Activated naive CD8-positive, alpha-beta T cell treated with anti-CD3 and anti-CD28 coated beads, Interleukin-2, amount 10 ng/mL, durations not matched to agents 7 days and 5 days (primary cell): ENCODE measurements at regions of chr17 and their contacts with region 1.

Region 1: DNA sequence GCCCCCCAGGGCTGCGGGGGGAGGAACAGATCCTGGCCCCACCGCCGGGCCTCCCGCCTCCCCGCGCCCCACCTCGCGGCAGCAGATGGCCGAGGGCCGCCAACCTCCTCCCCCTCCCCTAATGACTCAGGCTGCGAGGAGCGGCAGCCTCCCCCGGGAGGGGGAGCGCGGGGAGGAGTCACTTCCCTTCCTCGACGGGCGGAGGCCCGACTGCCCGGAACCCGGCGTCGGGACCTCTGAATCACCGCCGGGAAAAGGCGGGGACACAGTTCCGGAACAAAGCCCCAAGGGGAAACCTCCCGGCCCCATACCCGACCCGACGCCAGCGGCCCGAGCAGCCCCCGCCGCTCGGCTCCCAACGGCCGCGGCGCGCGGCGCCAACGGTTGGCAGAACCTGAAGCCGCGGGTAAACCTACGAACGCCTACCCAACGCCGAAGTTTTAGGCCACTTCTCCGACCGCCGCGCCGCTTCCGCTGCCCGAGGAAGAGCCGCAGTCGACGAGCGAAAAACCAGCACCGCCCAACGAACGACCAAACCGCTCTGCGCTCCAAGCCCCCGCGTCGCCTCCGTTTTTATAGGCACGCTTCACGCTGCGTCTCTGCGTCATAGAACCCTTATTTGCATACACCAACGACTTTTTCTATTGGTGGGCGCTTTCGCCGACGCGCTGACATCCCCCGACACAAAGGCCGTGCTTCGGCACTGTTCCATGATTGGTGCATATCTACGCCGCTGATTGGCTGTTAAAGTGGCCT is 5.2 kb upstream of the UNK start:
- DNase-seq: peak; percentile 93
- ATAC-seq: peak; percentile 76
- H3K4me3 Mint-ChIP-seq: peak overlapping the region; percentile 99
- H3K27ac Mint-ChIP-seq: peak overlapping the region; percentile 99
- H3K4me1 Mint-ChIP-seq: peaks cover 42% of the 10 kb centered on the region
- H3K27me3 Mint-ChIP-seq: no peaks in the 10 kb centered on the region

Region 2: GRCh38 chr17:75753514-75754377 is 25.7 kb before region 1 on chr17:
- POLR2A ChIA-PET with region 1: interaction called, 25 read pairs
- DNase-seq: peak; percentile 89
- ATAC-seq: peak; percentile 81
- H3K4me3 Mint-ChIP-seq: peak overlapping the region; percentile 54
- H3K27ac Mint-ChIP-seq: no peak overlapping the region
- H3K4me1 Mint-ChIP-seq: peaks cover 8% of the 10 kb centered on the region
- H3K27me3 Mint-ChIP-seq: no peaks in the 10 kb centered on the region

Region 3: DNA sequence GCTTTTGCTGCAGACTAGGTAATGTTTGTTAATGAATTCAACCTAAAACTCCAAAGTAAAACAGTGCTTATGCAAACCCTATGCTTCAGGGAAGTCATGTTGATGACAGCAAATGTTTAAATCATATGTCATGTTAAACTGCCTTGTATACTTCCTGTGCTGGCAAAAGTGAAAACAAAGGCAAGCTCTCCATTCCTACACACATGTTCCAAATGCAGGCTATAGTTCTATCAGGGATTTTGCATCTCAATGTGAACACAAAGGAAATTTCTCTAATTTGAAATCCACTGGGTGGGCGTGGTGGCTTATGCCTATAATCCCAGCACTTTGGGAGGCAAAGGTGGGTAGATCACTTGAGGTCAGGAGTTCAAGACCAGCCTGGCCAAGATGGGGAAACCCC is 24.5 kb after region 1 on chr17:
- POLR2A ChIA-PET with region 1: interaction called, 11 read pairs
- DNase-seq: no peak
- ATAC-seq: peak; percentile 39
- H3K4me3 Mint-ChIP-seq: no peak overlapping the region
- H3K27ac Mint-ChIP-seq: no peak overlapping the region
- H3K4me1 Mint-ChIP-seq: peaks cover 6% of the 10 kb centered on the region
- H3K27me3 Mint-ChIP-seq: no peaks in the 10 kb centered on the region

Region 4: DNA sequence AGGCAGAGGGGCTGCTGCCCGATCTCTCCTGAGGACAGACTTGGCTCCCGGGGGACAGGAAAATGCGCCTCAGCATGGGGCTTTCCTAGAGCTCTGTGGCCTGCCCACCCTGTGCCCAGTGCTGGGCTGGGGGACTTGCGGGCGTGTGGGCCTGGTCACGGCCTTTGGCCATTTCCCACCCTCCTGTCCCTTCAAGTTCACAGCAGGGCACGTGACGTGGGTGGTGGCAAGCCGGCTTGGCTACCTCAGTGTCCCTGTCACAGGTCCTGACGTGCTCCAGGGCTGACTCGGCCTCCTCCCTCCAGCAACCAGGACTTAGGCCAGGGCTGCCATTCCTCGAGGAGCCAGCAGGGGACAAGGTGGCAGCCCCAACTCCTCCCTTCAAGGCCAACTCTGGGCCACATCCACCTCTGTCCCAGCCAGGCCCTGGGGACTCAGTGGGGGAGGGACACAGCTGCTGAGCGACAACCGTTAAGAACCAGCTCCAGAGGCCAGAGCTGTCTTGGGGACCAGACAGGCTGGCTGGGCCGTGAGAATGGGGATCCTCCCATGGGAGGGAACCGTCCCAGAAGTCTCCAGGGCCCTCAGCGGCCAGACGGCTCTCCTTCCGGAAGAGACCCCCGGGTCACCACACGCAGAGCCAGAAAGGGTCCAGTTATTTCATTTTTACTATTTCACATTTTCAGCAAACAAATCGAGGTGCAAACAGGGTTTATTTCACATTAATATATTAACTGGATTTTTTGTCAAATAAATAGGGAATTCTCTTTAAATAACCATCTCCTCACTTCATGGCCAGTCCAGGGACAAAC is 65.8 kb after region 1 on chr17:
- POLR2A ChIA-PET with region 1: interaction called, 126 read pairs
- DNase-seq: peak; percentile 71
- ATAC-seq: peak; percentile 36
- H3K4me3 Mint-ChIP-seq: peak overlapping the region; percentile 51
- H3K27ac Mint-ChIP-seq: peak overlapping the region; percentile 83
- H3K4me1 Mint-ChIP-seq: peaks cover 14% of the 10 kb centered on the region
- H3K27me3 Mint-ChIP-seq: no peaks in the 10 kb centered on the region

Region 5: GRCh38 chr17:75896415-75897159 is 117.2 kb after region 1 on chr17 and contains the start of gene TRIM65:
- POLR2A ChIA-PET with region 1: interaction called, 16 read pairs
- DNase-seq: peak; percentile 89
- ATAC-seq: peak; percentile 87
- H3K4me3 Mint-ChIP-seq: peak within 1 kb of the TSS; percentile 87
- H3K27ac Mint-ChIP-seq: peak within 1 kb of the TSS; percentile 86
- H3K4me1 Mint-ChIP-seq: peaks cover 18% of the 10 kb centered on the region
- H3K27me3 Mint-ChIP-seq: no peaks in the 10 kb centered on the region
- total RNA-seq, gene TRIM65: 35.3 to 36.3 TPM

Region 6: GRCh38 chr17:76250141-76250540 is 470.7 kb after region 1 on chr17:
- POLR2A ChIA-PET with region 1: no interaction called
- DNase-seq: peak; percentile 4
- ATAC-seq: no peak
- H3K4me3 Mint-ChIP-seq: no peak overlapping the region
- H3K27ac Mint-ChIP-seq: peak overlapping the region; percentile 2
- H3K4me1 Mint-ChIP-seq: peaks cover 50% of the 10 kb centered on the region
- H3K27me3 Mint-ChIP-seq: no peaks in the 10 kb centered on the region